ENCODE measurements at regions of chrX and their contacts with region 1.

Region 1: GRCh38 chrX:24918715-24919114 is 97.0 kb downstream of the ARX start:
- DNase-seq: no peak
- ATAC-seq: no peak
- H3K4me3 ChIP-seq: no peak overlapping the region
- H3K27ac ChIP-seq: no peak overlapping the region
- H3K4me1 ChIP-seq: no peaks in the 10 kb centered on the region
- H3K27me3 ChIP-seq: no peaks in the 10 kb centered on the region

Region 2: DNA sequence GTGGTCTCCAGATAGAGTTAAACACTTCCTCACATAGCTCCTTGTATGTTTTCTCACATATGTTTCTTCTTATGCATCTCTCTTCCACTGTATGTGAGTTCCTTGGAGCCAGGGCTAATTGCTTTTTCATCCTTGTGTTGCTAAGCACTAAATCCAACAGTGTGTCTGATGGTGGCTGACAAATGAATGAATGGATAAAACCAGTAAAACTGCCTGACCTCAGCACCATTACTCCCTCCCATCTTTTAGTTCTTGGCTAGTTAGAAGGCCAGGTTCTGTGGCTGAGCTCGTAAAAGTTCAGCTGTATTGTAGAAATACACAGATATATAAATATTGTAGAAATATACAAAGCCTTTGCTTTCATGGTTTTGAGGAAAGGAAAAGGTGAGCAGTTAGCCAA is 46.7 kb after region 1 on chrX:
- intact Hi-C with region 1: loop called in 1 of 2 experiments (anchors 5 kb)
- DNase-seq: no peak
- ATAC-seq: no peak
- H3K4me3 ChIP-seq: no peak overlapping the region
- H3K27ac ChIP-seq: no peak overlapping the region
- H3K4me1 ChIP-seq: no peaks in the 10 kb centered on the region
- H3K27me3 ChIP-seq: no peaks in the 10 kb centered on the region

Region 3: DNA sequence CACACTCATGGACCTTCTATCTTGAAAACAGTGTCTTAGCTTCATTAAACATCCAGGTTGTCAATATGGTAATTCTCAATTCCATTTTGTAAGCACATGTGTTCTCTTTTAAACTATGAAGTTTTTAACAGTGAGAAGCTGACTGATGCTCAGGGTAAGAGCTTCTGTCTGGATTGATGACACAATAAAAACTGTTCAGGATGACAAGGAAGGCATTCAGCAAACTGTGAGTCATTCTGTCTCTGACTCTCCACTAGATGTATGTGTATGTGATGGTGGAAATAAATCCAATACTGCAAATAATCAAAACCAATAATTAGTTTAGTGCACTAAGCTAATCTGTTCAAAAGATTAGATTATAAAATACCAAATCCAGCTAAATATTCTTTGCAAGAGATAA is 212.3 kb after region 1 on chrX:
- intact Hi-C with region 1: no loop called
- DNase-seq: no peak
- ATAC-seq: no peak
- H3K4me3 ChIP-seq: no peak overlapping the region
- H3K27ac ChIP-seq: no peak overlapping the region
- H3K4me1 ChIP-seq: no peaks in the 10 kb centered on the region
- H3K27me3 ChIP-seq: no peaks in the 10 kb centered on the region